Activated naive CD4-positive, alpha-beta T cell treated with anti-CD3 and anti-CD28 coated beads for 36 hours (primary cell): ENCODE measurements at regions of chr5 and their contacts with region 1.

Region 1: DNA sequence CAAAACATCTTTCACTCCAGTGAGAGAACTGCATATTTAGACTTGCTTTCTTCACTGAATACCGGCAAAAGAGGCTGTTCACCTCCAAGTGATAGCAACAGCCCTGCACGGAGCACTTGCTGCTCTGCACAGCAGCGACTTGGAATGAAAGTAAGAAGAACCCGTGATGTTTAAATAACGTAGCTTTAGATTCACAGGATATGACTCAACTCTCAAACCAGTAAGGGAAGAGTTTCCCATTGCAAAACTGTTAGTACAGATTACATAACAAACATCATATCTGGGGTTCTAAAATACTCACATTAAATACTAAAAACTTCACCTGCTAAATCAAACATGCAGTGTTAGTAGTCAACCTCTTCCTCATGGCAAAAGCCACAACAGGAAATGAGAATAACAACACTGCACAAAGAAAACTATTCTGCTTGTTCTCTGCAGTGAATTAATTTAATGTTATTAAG is 203.4 kb downstream of the MCTP1 start:
- DNase-seq: peak; percentile 64
- H3K4me3 Mint-ChIP-seq: no peak overlapping the region
- H3K27ac Mint-ChIP-seq: peak overlapping the region; percentile 24
- H3K4me1 Mint-ChIP-seq: peaks cover 13% of the 10 kb centered on the region
- H3K27me3 Mint-ChIP-seq: peaks cover 12% of the 10 kb centered on the region

Region 2: DNA sequence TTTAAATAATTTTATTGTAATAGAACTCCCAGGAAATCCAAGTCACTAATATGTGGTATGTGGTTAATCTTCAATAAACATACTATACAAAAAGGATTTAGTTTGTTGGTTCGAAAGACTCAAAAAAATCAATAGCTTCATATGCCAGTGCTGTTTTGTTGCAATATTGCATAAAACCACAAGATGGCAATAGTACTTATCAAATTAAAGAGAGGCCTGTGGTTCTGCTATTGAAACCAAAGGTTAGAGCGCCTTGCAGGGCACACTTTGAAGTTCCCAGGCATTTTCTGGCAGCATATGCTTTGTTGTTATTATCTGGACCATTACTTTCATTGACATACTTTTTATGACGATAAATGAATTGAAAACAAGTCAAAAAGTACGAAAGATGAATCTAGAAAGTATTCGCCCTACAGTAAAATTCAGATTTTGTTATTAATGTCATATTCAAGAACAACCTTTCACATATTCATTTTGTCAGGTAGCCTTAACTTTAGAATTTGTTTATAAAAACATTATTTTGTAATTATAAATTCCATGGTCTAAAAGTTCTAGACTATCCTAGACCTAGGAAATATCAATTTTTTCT is 112.9 kb before region 1 on chr5:
- CTCF ChIA-PET with region 1: no interaction called
- intact Hi-C with region 1: loop called (anchors 5 kb)
- DNase-seq: peak; percentile 10
- H3K4me3 Mint-ChIP-seq: no peak overlapping the region
- H3K27ac Mint-ChIP-seq: no peak overlapping the region
- H3K4me1 Mint-ChIP-seq: no peaks in the 10 kb centered on the region
- H3K27me3 Mint-ChIP-seq: no peaks in the 10 kb centered on the region

Region 3: DNA sequence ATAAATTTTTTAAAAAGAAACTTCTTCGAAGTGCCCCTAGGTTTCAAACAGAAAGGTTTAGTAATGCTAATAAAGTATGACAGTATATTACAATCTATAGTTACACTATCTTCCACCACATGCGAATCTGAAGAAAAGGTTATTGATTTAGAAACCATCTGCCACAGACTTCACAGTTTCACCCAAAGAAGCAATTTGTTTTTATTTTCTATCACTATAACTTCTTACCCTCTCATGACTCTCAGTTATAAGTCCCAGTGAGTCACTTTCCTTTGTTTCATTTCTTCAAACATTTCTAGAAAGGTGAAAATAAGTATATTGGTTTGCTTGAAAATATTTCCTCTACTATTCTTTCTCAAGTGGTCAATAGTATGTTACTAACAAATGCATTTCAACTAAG is 109.8 kb after region 1 on chr5:
- CTCF ChIA-PET with region 1: interaction called, 4 read pairs
- intact Hi-C with region 1: loop called (anchors 1 kb)
- DNase-seq: no peak
- H3K4me3 Mint-ChIP-seq: no peak overlapping the region
- H3K27ac Mint-ChIP-seq: no peak overlapping the region
- H3K4me1 Mint-ChIP-seq: no peaks in the 10 kb centered on the region
- H3K27me3 Mint-ChIP-seq: no peaks in the 10 kb centered on the region

Region 4: DNA sequence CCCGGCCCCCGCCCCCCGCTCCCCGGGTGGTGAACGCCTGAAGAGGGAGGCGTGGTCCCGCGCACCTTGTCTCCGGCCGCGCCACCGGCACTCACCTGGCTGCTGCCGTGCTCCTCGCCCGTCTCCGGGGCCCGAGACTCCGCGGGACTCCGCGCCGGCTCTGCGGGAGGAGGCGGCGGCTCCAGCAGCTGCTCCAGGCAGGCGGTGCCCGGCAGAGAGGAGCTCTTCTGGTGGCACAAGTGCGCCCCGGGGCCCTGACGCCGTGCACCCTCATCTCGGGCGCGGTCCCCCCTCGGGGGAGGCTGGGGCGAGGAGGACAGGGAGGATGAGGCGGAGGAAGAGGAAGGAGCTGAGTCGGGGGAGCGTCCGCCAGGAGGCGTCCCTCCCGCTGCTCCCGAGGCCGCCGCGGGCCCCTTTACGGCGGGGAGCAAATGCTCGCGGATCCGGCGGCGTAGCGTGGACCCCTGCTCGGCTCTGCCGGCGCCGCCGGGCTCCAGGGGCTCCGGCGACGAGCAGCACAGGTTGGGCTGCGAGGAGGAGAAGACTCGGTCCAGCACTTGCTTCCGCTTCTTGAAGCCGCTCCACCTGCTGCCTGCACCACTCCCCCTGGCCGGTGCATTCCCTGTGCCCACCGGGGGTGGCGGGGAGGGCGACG is 202.4 kb after region 1 on chr5:
- CTCF ChIA-PET with region 1: no interaction called
- intact Hi-C with region 1: loop called (anchors 1 kb)
- DNase-seq: peak; percentile 41
- H3K4me3 Mint-ChIP-seq: peak overlapping the region; percentile 45
- H3K27ac Mint-ChIP-seq: no peak overlapping the region
- H3K4me1 Mint-ChIP-seq: peaks cover 9% of the 10 kb centered on the region
- H3K27me3 Mint-ChIP-seq: peaks cover 33% of the 10 kb centered on the region

Region 5: GRCh38 chr5:95718203-95718602 is 636.7 kb after region 1 on chr5:
- CTCF ChIA-PET with region 1: no interaction called
- intact Hi-C with region 1: loop called (anchors 10 kb)
- DNase-seq: peak; percentile 60
- H3K4me3 Mint-ChIP-seq: no peak overlapping the region
- H3K27ac Mint-ChIP-seq: no peak overlapping the region
- H3K4me1 Mint-ChIP-seq: peaks cover 22% of the 10 kb centered on the region
- H3K27me3 Mint-ChIP-seq: peaks cover 11% of the 10 kb centered on the region